Mammary epithelial cell (primary cell): ENCODE measurements at regions of chr17 and their contacts with region 1.

Region 1: DNA sequence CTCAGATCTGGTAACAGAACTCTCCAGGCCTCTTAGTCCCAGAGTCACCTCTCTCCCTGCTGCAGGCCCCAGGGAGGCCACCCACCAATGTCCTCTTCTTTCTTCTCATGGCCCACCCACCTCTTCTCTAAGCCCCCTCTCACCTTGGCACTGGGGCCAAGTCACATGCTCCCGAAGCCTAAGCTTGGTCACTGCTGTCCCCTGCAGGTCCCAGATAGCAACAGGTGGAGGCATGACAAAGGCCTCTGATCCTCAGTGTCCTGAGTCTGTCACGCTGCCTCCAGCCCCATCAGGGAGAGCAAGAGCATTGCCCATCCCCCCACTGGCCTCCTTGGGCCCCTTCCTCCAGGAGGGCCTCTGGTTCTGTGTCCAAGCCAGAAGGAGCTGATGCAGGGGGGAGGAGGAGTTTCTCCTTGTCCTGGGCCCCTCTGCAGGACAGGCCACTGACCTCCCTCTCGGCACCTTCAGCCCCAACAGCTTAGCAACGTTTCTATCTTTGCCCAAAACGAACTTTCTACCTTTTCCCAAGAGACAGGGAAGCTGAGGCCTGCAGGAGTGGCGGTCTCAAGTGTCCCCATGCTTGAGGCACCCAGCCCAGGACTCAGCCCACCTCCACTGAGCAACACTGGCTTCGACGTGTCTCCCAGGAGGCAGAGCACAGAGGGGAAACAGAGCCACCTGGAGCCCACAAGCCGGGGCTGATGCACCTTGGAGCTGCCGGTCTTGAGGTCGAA is 8.6 kb downstream of the P2RX1 start:
- DNase-seq: no peak
- H3K4me3 ChIP-seq: no peak overlapping the region
- H3K27ac ChIP-seq: no peak overlapping the region
- H3K4me1 ChIP-seq: no peaks in the 10 kb centered on the region
- H3K27me3 ChIP-seq: no peaks in the 10 kb centered on the region
- CTCF ChIP-seq: peak in 1 of 2 donors; percentile 49

Region 2: GRCh38 chr17:3762922-3763776 is 144.5 kb before region 1 on chr17:
- CTCF ChIA-PET with region 1: no interaction called
- dilution Hi-C with region 1: no loop called
- in situ Hi-C with region 1: no loop called
- intact Hi-C with region 1: no loop called
- DNase-seq: no peak
- H3K4me3 ChIP-seq: no peak overlapping the region
- H3K27ac ChIP-seq: no peak overlapping the region
- H3K4me1 ChIP-seq: no peaks in the 10 kb centered on the region
- H3K27me3 ChIP-seq: no peaks in the 10 kb centered on the region
- CTCF ChIP-seq: no peak

Region 3: GRCh38 chr17:3845621-3846441 is 61.8 kb before region 1 on chr17 and contains the start of gene NCBP3:
- CTCF ChIA-PET with region 1: interaction called, 4 read pairs
- dilution Hi-C with region 1: no loop called
- in situ Hi-C with region 1: no loop called
- intact Hi-C with region 1: loop called (anchors 1 kb)
- DNase-seq: peak; percentile 90
- H3K4me3 ChIP-seq: peak within 1 kb of the TSS; percentile 79 to 99 (median 93)
- H3K27ac ChIP-seq: peak within 1 kb of the TSS; percentile 76
- H3K4me1 ChIP-seq: peaks cover 16% of the 10 kb centered on the region
- H3K27me3 ChIP-seq: no peaks in the 10 kb centered on the region
- CTCF ChIP-seq: peak; percentile 65 to 96
- total RNA-seq, gene NCBP3: 21.2 to 42.0 TPM

Region 4: GRCh38 chr17:3859940-3860339 is 47.7 kb before region 1 on chr17:
- CTCF ChIA-PET with region 1: no interaction called
- dilution Hi-C with region 1: loop called (anchors 5 kb)
- in situ Hi-C with region 1: no loop called
- intact Hi-C with region 1: loop called (anchors 2 kb)
- DNase-seq: no peak
- H3K4me3 ChIP-seq: no peak overlapping the region
- H3K27ac ChIP-seq: no peak overlapping the region
- H3K4me1 ChIP-seq: no peaks in the 10 kb centered on the region
- H3K27me3 ChIP-seq: no peaks in the 10 kb centered on the region
- CTCF ChIP-seq: no peak

Region 5: DNA sequence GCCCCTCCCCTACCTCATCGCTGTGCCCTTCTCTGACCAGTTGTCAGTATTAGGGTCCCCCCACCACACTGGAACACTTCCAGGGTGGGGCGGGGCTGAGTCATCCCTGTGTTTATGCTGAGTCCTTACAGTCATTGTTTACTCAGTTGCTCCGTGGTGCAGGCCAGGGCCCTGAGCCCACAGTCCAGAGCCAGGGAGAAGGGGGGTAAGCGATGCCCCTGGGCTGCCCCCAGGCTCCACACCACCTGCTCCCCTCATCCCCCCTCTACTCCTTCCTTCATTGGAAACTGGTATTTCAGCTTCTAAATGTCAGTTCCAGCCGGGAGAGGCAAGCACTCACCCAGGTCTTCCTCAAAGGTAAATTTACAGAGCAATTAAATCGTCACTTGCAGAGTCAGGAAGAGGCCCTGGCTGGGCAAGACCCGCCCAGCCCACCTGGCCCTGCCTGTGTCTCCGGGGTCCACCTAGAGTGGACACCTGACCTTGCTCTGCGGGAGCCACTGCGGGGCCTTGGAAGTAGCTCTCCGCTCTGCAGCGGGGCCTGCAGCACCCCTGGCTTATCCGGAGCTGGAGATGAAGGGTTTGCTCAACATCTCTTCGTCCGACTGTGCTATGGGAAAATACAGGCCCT is 51.8 kb after region 1 on chr17:
- CTCF ChIA-PET with region 1: no interaction called
- dilution Hi-C with region 1: loop called (anchors 5 kb)
- in situ Hi-C with region 1: no loop called
- intact Hi-C with region 1: no loop called
- DNase-seq: no peak
- H3K4me3 ChIP-seq: no peak overlapping the region
- H3K27ac ChIP-seq: no peak overlapping the region
- H3K4me1 ChIP-seq: no peaks in the 10 kb centered on the region
- H3K27me3 ChIP-seq: peaks cover 12% of the 10 kb centered on the region
- CTCF ChIP-seq: no peak